ENCODE measurements at regions of chr3 and their contacts with region 1.

Region 1: GRCh38 chr3:52001443-52001974 is 5.8 kb upstream of the RPL29 start:
- DNase-seq: peak; percentile 71 to 87 (median 82)
- H3K4me3 ChIP-seq: no peak overlapping the region
- H3K27ac ChIP-seq: no peak overlapping the region
- H3K4me1 ChIP-seq: peaks cover 12% of the 10 kb centered on the region
- H3K27me3 ChIP-seq: no peaks in the 10 kb centered on the region
- CTCF ChIP-seq: peak; percentile 59 to 96 (median 94)
- EP300 ChIP-seq: no peak
- POLR2A ChIP-seq: no peak

Region 2: DNA sequence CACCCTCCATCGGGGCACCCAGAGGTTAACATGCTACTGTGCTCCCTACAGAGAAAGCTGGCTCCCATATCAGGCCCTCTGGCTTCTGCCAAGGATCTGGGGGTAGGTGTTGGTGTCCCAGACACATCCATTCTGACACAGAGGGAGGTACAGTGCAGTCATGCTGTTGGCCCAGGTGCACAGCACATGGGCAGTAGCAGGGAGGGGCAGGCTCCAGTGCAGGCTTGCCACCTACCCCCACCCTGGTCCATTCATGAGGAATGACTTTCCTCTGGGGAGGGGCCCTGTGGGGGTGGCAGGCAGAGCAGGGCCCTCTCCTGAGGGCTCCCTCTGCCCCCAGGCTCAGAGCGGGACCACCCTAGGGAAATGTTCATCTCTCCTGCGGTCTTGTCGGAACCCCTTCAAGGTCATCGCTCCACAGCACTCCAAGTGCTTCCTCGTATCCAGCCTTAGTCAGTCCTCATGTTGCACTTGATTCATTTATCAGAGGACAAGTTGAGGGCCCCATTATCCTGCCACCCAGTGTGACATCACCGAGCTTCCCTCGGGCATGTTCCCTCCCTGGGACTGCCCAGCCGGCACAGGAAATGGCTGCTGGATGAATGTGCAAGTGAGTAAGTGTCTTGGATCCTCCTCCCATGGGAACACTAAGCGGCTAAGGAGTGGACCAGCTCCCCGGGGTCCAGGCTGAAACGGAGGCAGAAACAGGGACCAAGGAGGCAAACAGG is 44.8 kb after region 1 on chr3:
- intact Hi-C with region 1: loop called in 1 of 4 experiments (anchors 5 kb)
- DNase-seq: no peak
- H3K4me3 ChIP-seq: no peak overlapping the region
- H3K27ac ChIP-seq: no peak overlapping the region
- H3K4me1 ChIP-seq: no peaks in the 10 kb centered on the region
- H3K27me3 ChIP-seq: no peaks in the 10 kb centered on the region
- CTCF ChIP-seq: no peak
- EP300 ChIP-seq: no peak
- POLR2A ChIP-seq: no peak

Region 3: GRCh38 chr3:52056968-52057805 is 55.7 kb after region 1 on chr3:
- intact Hi-C with region 1: loop called in 2 of 4 experiments (anchors 2 to 5 kb)
- DNase-seq: peak; percentile 99 to 100 (median 99)
- H3K4me3 ChIP-seq: peak overlapping the region; percentile 54
- H3K27ac ChIP-seq: peak overlapping the region; percentile 63 to 84
- H3K4me1 ChIP-seq: peaks cover 22% of the 10 kb centered on the region
- H3K27me3 ChIP-seq: no peaks in the 10 kb centered on the region
- CTCF ChIP-seq: no peak
- EP300 ChIP-seq: peak; percentile 70
- POLR2A ChIP-seq: peak; percentile 20

Region 4: DNA sequence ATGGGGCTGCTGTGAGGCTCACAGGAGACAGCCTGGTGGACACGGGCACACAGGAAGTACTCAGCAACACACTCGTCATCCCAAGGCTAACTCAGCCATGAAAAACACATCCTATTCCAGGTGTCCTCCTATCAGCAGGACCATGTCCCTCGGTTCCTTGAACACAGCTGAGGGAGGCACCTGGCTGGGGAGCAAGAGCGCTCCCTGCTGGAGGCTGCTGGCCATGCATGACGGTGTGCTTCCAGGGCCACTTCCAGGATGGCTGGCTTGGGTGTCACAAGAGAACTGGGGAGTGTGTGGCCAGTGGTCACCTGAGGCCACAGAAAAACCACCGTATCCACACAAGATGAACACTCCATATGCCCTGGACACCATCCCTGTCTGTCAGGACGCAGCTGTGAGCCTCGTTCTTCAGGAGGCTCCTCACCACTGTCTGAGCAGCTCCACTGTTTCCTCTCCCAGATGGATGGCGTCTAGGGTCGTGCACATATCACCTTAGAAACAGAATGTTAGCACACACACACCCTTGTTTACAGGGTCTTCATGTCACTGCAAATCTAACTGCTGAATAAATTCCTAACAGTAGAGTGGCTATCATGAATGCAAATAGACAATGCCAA is 121.7 kb after region 1 on chr3:
- intact Hi-C with region 1: loop called (anchors 5 kb)
- DNase-seq: peak; percentile 41 to 81 (median 67)
- H3K4me3 ChIP-seq: no peak overlapping the region
- H3K27ac ChIP-seq: no peak overlapping the region
- H3K4me1 ChIP-seq: peaks cover 3% of the 10 kb centered on the region
- H3K27me3 ChIP-seq: no peaks in the 10 kb centered on the region
- CTCF ChIP-seq: peak; percentile 58 to 87 (median 68)
- EP300 ChIP-seq: no peak
- POLR2A ChIP-seq: no peak

Region 5: GRCh38 chr3:52144034-52144795 is 142.7 kb after region 1 on chr3:
- intact Hi-C with region 1: loop called (anchors 1 to 5 kb)
- DNase-seq: peak; percentile 79 to 89 (median 86)
- H3K4me3 ChIP-seq: no peak overlapping the region
- H3K27ac ChIP-seq: no peak overlapping the region
- H3K4me1 ChIP-seq: no peaks in the 10 kb centered on the region
- H3K27me3 ChIP-seq: no peaks in the 10 kb centered on the region
- CTCF ChIP-seq: peak; percentile 80 to 96 (median 95)
- EP300 ChIP-seq: no peak
- POLR2A ChIP-seq: peak; percentile 35

Region 6: DNA sequence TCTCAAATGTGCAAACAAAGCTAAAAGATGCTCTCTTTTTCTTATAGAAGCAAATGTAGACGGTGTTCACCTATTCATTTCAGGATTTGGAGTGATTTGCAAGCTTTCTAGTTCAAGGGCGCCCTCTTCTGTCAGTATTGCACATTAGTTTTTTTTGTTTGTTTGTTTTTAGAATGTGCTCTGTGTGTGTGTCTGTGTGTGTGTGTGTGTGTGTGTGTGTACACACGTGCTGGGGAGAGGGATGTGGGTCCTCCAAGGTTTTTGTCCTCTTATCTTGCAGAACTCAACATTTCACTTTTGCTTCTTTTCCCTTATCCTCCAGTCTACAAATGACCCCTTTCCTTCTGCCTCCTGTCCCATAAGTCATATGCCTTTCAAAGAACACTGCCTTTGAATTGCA is 338.1 kb after region 1 on chr3:
- intact Hi-C with region 1: loop called in 1 of 4 experiments (anchors 5 kb)
- DNase-seq: peak in 2 of 5 donors; percentile 42 to 55
- H3K4me3 ChIP-seq: no peak overlapping the region
- H3K27ac ChIP-seq: no peak overlapping the region
- H3K4me1 ChIP-seq: peaks cover 1% of the 10 kb centered on the region
- H3K27me3 ChIP-seq: no peaks in the 10 kb centered on the region
- CTCF ChIP-seq: peak; percentile 50 to 75 (median 68)
- EP300 ChIP-seq: no peak
- POLR2A ChIP-seq: no peak